ENCODE measurements at regions of chr7 and their contacts with region 1.

Region 1: DNA sequence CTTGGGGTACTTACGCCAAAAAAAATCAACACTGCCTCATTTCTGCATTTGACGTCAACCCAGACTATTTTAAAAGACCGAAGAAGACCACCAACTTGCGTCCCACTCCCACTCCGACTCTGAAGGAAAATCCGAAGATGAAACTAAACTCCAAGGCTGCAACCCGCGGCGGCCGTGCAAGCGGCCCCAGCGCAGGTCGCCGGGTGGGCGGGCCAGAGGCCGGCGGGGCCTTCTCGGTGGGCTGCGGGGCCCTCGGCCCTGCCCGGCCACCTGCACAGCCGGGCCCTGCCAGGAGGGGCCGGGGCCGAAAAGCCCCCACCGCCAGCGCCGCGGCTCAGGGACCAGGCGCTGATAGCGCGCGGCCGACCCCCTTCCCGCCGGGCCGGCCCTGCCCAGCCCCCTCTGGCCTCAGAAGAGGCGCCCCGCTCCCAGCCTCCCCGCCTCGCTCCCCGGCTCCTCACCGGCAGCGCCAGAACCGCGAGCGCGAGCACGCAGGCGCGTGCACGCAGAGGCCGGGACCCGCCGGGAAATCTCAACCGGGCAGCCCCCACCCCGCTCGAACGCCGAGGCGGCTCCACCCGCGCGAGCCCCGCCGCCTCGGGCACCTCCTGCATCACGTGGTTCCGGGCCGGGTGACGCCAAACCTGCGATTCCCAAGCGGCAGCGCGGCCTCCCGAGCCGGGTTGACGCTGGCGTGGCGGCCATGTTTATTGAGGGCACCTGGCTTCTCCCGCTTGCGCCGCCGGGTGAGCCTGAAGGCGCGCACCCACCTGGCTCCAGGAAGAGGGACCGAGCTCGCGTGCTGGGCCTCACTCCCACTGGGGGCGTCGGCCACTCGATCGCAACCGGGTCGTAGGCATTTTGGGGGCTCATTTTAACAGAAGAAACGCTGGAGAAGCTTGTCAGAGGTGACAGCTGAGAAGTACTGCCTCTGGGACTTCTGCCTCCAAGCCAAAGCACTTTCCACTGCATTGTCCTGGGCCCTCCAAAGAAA is at the start of gene C7orf25:
- DNase-seq: peak; percentile 96
- ATAC-seq: peak; percentile 92
- H3K4me3 ChIP-seq: peak within 1 kb of the TSS; percentile 45 to 83 (median 74)
- H3K4me3 Mint-ChIP-seq: peak within 1 kb of the TSS; percentile 92
- H3K27ac ChIP-seq: peak within 1 kb of the TSS; percentile 40 to 72
- H3K27ac Mint-ChIP-seq: peak within 1 kb of the TSS; percentile 90
- H3K4me1 ChIP-seq: peaks cover 19 to 21% of the 10 kb centered on the region in 2 donors
- H3K4me1 Mint-ChIP-seq: peaks cover 49% of the 10 kb centered on the region
- H3K27me3 ChIP-seq: no peaks in the 10 kb centered on the region
- H3K27me3 Mint-ChIP-seq: no peaks in the 10 kb centered on the region
- CTCF ChIP-seq: no peak
- total RNA-seq, gene C7orf25: 7.5 and 11.8 TPM in 2 replicates

Region 2: DNA sequence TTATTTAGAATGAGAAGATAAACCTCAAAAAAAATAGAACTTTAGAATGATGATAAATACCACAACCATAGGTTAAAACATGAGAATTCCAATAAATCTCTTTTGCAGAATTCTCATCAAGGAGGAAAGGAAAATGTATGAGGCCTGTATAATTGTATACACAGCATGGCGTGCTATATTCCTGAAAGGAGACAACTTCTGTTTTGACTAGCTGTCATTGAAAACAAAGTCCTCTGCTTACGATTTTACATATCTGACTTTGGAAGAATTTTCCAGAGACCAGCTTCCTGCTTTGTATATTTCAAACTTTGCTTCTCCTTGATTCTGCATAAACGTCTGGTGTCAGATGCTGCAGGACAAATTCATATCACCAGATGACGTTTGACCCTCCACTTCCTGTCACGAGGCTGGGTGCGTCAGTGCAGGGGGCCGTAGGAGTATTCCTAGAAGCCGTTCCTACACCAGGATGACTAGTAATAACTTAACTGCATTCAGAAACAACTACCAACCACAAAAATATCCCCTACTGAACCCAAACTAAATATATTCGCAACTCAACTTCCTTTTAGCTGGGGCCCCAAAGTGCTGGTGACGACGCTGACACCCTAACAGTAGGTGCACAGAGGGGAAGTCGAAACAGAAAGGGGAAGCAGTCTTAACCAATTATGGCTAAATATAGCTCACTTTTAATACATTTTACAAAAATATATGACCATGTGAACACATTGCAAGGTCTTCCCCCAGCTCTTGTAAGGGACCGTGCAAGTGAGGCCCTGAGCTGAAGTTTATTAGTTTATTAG is 1030.2 kb before region 1 on chr7:
- CTCF ChIA-PET with region 1: no interaction called
- POLR2A ChIA-PET with region 1: no interaction called
- intact Hi-C with region 1: loop called (anchors 2 kb)
- DNase-seq: peak; percentile 96
- ATAC-seq: peak; percentile 89
- H3K4me3 ChIP-seq: peak overlapping the region in 1 of 5 experiments; percentile 41
- H3K4me3 Mint-ChIP-seq: peak overlapping the region; percentile 84
- H3K27ac ChIP-seq: peak overlapping the region; percentile 87 to 91
- H3K27ac Mint-ChIP-seq: peak overlapping the region; percentile 93
- H3K4me1 ChIP-seq: peaks cover 57 to 63% of the 10 kb centered on the region in 2 donors
- H3K4me1 Mint-ChIP-seq: peaks cover 71% of the 10 kb centered on the region
- H3K27me3 ChIP-seq: no peaks in the 10 kb centered on the region
- H3K27me3 Mint-ChIP-seq: no peaks in the 10 kb centered on the region
- CTCF ChIP-seq: no peak

Region 3: DNA sequence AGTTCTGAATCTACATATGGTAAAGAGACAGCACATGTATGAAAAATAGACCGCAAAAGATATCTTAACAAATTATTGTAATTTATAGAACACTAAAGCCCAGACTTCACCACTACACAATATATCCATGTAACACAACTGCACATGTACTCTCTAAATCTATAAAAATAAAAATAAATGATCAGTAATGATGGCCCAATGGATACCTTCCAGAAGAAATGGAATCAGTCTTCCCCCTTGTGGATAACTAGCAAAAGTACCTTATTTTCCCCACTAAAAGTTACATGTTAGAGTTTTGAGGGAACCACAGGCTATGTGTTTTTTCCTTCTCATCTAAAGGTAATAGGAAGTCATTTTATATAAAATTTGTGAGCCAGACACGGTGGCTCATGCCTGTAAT is 25.6 kb before region 1 on chr7:
- CTCF ChIA-PET with region 1: interaction called, 3 read pairs
- POLR2A ChIA-PET with region 1: no interaction called
- intact Hi-C with region 1: loop called (anchors 1 kb)
- DNase-seq: no peak
- ATAC-seq: no peak
- H3K4me3 ChIP-seq: no peak overlapping the region
- H3K4me3 Mint-ChIP-seq: no peak overlapping the region
- H3K27ac ChIP-seq: no peak overlapping the region
- H3K27ac Mint-ChIP-seq: no peak overlapping the region
- H3K4me1 ChIP-seq: peaks cover 21 to 32% of the 10 kb centered on the region in 2 donors
- H3K4me1 Mint-ChIP-seq: peaks cover 55% of the 10 kb centered on the region
- H3K27me3 ChIP-seq: no peaks in the 10 kb centered on the region
- H3K27me3 Mint-ChIP-seq: no peaks in the 10 kb centered on the region
- CTCF ChIP-seq: peak; percentile 26

Region 4: DNA sequence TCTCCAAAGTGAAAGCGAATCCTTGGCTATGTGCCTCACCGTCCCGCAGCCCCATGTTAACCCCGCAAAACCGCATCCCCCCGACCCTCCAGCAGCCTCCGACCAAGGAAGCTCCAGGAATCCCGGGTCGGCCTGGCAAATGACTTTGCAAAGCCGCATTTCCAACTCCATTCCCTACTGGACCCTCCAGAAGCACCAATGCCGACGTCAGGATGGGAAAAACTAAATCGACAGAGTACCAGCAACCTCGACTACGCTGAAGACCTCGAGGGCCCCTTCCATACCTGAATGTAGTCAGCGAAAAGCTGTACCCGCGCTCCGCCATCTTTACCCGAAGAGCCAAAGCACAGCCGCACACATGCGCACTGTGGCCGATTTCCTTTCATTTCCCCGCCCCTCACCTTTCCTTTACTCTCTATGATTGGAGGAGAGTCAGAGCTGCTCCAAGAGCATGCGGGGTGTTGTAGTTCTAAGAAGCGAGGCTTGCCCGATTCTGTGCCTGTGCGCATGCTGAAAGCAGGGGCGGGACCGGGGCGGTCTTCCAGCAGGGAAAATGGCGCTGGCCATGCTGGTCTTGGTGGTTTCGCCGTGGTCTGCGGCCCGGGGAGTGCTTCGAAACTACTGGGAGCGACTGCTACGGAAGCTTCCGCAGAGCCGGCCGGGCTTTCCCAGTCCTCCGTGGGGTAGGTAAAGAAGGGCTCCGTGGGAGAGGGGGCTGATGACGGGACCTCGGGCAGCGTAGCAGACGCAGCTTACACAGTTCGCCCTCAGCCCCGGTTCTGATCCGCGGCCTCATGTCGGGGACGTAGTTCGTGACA is 20.3 kb after region 1 on chr7 and contains the starts of genes MRPL32 and PSMA2:
- CTCF ChIA-PET with region 1: interaction called, 4 read pairs
- POLR2A ChIA-PET with region 1: interaction called, 5 read pairs
- intact Hi-C with region 1: loop called (anchors 1 kb)
- DNase-seq: peak; percentile 97
- ATAC-seq: peak; percentile 100
- H3K4me3 ChIP-seq: peak within 1 kb of the TSS; percentile 79 to 98 (median 90)
- H3K4me3 Mint-ChIP-seq: peak within 1 kb of the TSS; percentile 91
- H3K27ac ChIP-seq: peak within 1 kb of the TSS; percentile 77 to 88
- H3K27ac Mint-ChIP-seq: peak within 1 kb of the TSS; percentile 94
- H3K4me1 ChIP-seq: peaks cover 36 to 38% of the 10 kb centered on the region in 2 donors
- H3K4me1 Mint-ChIP-seq: peaks cover 67% of the 10 kb centered on the region
- H3K27me3 ChIP-seq: no peaks in the 10 kb centered on the region
- H3K27me3 Mint-ChIP-seq: no peaks in the 10 kb centered on the region
- CTCF ChIP-seq: no peak
- total RNA-seq, gene MRPL32: 31.7 and 34.2 TPM in 2 replicates
- total RNA-seq, gene PSMA2: 40.6 and 47.8 TPM in 2 replicates

Measured in B cell (primary cell).